ENCODE measurements at regions of chr10 and their contacts with region 1.

Region 1: DNA sequence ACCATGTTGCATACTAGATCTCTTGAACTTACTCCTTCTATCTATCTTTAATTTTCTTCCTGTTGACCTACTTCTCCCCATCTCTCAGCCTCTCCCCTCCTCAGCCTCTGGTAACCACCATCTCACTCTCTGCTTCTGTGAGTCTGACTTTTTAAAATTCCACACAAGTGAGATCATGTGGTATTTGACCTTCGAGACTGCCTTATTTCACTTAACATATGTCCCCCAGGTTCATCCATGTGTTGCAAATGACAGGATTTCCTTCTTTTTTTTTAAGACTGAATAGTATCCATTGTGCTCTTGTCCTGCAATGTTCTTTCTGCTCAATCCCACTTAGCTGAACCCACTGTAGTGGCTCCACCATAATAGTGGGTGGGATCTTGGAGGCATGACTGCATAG is 51.4 kb upstream of the DNAJC1 start:
- DNase-seq: no peak
- H3K4me3 ChIP-seq: no peak overlapping the region
- H3K27ac ChIP-seq: no peak overlapping the region
- H3K4me1 ChIP-seq: no peaks in the 10 kb centered on the region
- H3K27me3 ChIP-seq: no peaks in the 10 kb centered on the region
- CTCF ChIP-seq: no peak

Region 2: DNA sequence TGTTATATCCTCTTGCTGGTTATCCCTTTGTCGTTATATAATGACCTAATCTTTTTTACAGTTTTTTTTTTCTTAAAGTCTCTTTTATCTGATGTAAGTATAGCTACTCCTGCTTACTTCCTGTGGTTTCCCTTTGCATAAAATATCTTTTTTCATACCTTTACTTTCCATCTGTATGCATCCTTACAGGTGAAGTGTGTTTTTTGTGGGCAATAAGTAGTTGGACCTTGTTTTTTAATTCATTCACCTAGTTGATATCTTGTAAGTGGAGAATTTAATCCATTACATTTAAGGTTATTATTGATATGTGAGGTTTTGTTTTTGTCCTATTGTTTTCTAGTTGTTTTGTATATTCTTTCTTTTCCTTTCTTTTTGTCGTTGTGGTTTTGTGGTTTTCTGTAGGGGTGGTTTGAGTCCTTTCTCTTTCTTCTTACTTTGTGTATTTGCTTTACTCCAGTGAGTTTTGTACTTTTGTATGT is 352.3 kb before region 1 on chr10:
- intact Hi-C with region 1: no loop called
- DNase-seq: no peak
- H3K4me3 ChIP-seq: no peak overlapping the region
- H3K27ac ChIP-seq: no peak overlapping the region
- H3K4me1 ChIP-seq: no peaks in the 10 kb centered on the region
- H3K27me3 ChIP-seq: no peaks in the 10 kb centered on the region
- CTCF ChIP-seq: no peak

Region 3: DNA sequence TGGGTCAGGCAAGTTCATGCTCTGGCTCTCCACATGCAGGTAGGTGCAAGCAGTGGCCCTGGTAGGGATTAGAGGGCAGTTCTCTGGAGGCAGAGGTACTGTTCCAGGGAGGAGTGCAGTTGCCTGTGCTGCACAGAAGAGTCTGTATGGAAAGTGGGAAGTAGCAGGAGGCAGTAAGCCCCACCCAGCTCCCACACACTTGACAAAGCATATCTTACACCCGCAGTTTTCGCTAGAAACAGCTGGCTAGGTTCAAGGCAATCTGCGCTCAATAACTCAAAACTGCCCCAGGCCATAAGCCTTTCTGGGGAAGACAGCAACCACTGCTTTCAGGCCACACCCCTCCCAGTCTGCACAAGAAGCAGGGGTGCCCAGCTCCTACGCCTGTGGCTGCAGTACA is 839.8 kb after region 1 on chr10:
- intact Hi-C with region 1: loop called (anchors 5 kb)
- DNase-seq: peak in 1 of 2 donors; percentile 20
- H3K4me3 ChIP-seq: no peak overlapping the region
- H3K27ac ChIP-seq: no peak overlapping the region
- H3K4me1 ChIP-seq: no peaks in the 10 kb centered on the region
- H3K27me3 ChIP-seq: no peaks in the 10 kb centered on the region
- CTCF ChIP-seq: no peak